ENCODE measurements at regions of chr2 and their contacts with region 1.

Region 1: GRCh38 chr2:9703085-9703641 is 72.4 kb upstream of the YWHAQ start:
- DNase-seq: peak; percentile 93
- H3K4me3 Mint-ChIP-seq: peak overlapping the region; percentile 32
- H3K27ac Mint-ChIP-seq: peak overlapping the region; percentile 64
- H3K4me1 Mint-ChIP-seq: peaks cover 41% of the 10 kb centered on the region
- H3K27me3 Mint-ChIP-seq: peaks cover 2% of the 10 kb centered on the region

Region 2: DNA sequence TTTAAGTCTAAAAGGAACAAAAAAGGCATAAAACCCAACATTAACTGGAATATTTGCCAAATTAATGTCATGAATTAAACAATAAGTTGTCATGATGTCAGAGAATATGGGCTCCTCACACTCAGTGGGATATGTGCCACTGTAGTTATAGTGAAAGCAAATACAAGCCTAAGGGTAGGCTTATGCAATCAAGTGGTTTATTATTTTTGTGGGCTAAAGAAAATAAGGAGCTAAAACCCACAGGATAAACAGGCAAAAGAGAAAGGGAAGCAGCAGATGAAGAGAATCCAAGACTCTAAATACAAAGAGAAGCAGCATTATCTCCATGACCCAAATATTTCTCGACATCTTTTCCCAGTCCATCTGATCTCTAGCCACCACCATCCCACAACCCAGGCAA is 89.9 kb before region 1 on chr2:
- intact Hi-C with region 1: loop called (anchors 1 kb)
- DNase-seq: no peak
- H3K4me3 Mint-ChIP-seq: no peak overlapping the region
- H3K27ac Mint-ChIP-seq: no peak overlapping the region
- H3K4me1 Mint-ChIP-seq: peaks cover 77% of the 10 kb centered on the region
- H3K27me3 Mint-ChIP-seq: no peaks in the 10 kb centered on the region

Measured in activated CD4-positive, alpha-beta T cell treated with anti-CD3 and anti-CD28 coated beads, Interleukin-2, amount 10 ng/mL, durations not matched to agents 24 days and 14 days (primary cell).